ENCODE measurements at regions of chr9 and their contacts with region 1.

Region 1: DNA sequence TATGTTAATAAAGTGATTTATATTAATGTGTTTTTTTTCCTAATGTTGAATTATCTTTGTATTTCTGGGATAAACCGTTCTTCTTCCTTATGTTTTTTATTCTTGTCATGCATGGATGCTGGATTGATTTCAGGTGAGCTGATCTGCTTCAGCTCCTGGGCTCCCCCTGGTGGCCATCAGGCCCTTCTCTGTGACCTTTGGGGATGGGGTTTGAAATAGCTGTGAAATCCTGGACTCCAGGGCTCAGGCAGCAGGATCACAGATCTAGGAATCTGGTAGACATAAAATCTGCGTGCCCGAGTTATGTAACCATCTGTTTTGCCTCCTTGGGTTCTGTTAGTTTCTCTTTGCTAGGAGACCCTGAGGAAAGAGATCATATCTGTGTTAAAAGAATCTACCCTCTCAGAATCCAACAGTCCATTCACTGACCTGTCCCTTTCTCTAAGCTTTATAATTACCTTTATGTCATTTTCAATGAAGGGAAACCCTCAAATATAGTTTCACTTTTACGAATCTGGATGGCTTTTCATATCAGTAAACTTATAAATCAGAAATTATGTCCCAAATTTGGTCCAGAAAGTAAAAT is 12.2 kb upstream of the OR13J1 start:
- DNase-seq: peak; percentile 70 to 75 (median 71)
- H3K4me3 ChIP-seq: no peak overlapping the region
- H3K4me3 Mint-ChIP-seq: no peak overlapping the region
- H3K27ac ChIP-seq: no peak overlapping the region
- H3K27ac Mint-ChIP-seq: no peak overlapping the region
- H3K4me1 ChIP-seq: no peaks in the 10 kb centered on the region
- H3K4me1 Mint-ChIP-seq: no peaks in the 10 kb centered on the region
- H3K27me3 ChIP-seq: no peaks in the 10 kb centered on the region
- H3K27me3 Mint-ChIP-seq: peaks cover 2 to 8% of the 10 kb centered on the region in 2 donors

Region 2: GRCh38 chr9:35489313-35490154 is 392.8 kb before region 1 on chr9 and contains the start of gene RUSC2:
- CTCF ChIA-PET with region 1: no interaction called
- POLR2A ChIA-PET with region 1: no interaction called
- intact Hi-C with region 1: loop called (anchors 10 kb)
- DNase-seq: peak in 4 of 5 donors; percentile 16 to 30 (median 24)
- H3K4me3 ChIP-seq: peak within 1 kb of the TSS in 1 of 2 donors; percentile 45
- H3K4me3 Mint-ChIP-seq: peak within 1 kb of the TSS; percentile 55 to 85 (median 78)
- H3K27ac ChIP-seq: no peak within 1 kb of the TSS
- H3K27ac Mint-ChIP-seq: peak within 1 kb of the TSS in 3 of 7 donors; percentile 31 to 36 (median 35)
- H3K4me1 ChIP-seq: peaks cover 11% of the 10 kb centered on the region
- H3K4me1 Mint-ChIP-seq: peaks cover 7 to 20% (median 13%) of the 10 kb centered on the region in 4 donors
- H3K27me3 ChIP-seq: peaks cover 6% of the 10 kb centered on the region
- H3K27me3 Mint-ChIP-seq: peaks cover 16 to 23% of the 10 kb centered on the region in 2 donors
- total RNA-seq, gene RUSC2: 0.50 to 0.55 TPM

Region 3: DNA sequence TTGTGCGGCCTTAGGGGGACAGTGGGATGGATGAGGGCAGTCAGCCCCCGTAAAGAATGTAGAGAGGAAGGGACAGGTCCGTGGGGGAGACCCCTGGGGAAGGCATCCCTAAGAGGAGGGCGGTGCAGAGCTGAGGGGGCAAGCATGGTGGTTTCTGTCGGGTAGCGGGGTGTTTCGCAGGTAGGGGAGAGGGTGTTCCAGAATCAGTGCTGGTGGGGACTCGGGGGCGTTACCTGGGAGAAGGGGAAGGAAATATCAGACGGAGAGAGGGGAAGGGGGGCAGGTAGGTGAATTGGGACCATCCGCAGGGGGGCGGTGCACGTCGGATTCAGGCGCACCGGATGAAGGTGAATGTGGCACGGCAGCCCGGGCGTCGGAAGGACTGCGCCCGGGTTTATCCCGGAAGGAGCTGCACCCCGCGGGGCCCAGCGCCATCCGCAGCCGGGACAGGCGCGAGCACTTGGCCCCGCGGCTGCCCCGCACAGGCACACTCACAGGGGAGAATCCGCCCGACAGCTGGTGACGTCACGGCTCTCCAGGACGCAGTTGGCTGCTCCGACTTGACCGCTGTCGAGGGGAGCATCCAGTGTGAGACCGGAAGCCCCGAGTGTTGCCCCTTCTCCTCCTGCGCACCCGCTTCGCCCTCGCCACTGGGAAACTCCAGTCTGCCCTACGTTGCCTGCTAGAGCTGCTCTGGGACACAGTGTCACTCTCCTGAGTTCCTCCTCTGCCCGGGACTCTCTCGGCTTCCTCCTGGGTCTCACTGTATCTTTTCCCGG is 265.5 kb before region 1 on chr9:
- CTCF ChIA-PET with region 1: no interaction called
- POLR2A ChIA-PET with region 1: no interaction called
- intact Hi-C with region 1: loop called (anchors 5 kb)
- DNase-seq: peak; percentile 63 to 75 (median 64)
- H3K4me3 ChIP-seq: peak overlapping the region; percentile 63 to 64
- H3K4me3 Mint-ChIP-seq: peak overlapping the region; percentile 84 to 91 (median 88)
- H3K27ac ChIP-seq: peak overlapping the region; percentile 60
- H3K27ac Mint-ChIP-seq: peak overlapping the region; percentile 89 to 95 (median 93)
- H3K4me1 ChIP-seq: peaks cover 36% of the 10 kb centered on the region
- H3K4me1 Mint-ChIP-seq: peaks cover 26 to 58% (median 35%) of the 10 kb centered on the region in 4 donors
- H3K27me3 ChIP-seq: no peaks in the 10 kb centered on the region
- H3K27me3 Mint-ChIP-seq: no peaks in the 10 kb centered on the region

Region 4: GRCh38 chr9:35790385-35791296 is 91.7 kb before region 1 on chr9:
- CTCF ChIA-PET with region 1: interaction called, 108 read pairs
- POLR2A ChIA-PET with region 1: interaction called, 7 read pairs
- intact Hi-C with region 1: loop called (anchors 1 kb)
- DNase-seq: peak; percentile 58 to 69 (median 64)
- H3K4me3 ChIP-seq: no peak overlapping the region
- H3K4me3 Mint-ChIP-seq: no peak overlapping the region
- H3K27ac ChIP-seq: no peak overlapping the region
- H3K27ac Mint-ChIP-seq: peak overlapping the region in 2 of 7 donors; percentile 27 to 47
- H3K4me1 ChIP-seq: no peaks in the 10 kb centered on the region
- H3K4me1 Mint-ChIP-seq: peaks cover 7 to 12% (median 9%) of the 10 kb centered on the region in 4 donors
- H3K27me3 ChIP-seq: no peaks in the 10 kb centered on the region
- H3K27me3 Mint-ChIP-seq: no peaks in the 10 kb centered on the region

Region 5: GRCh38 chr9:35797311-35798109 is 84.8 kb before region 1 on chr9:
- CTCF ChIA-PET with region 1: interaction called, 11 read pairs
- POLR2A ChIA-PET with region 1: no interaction called
- intact Hi-C with region 1: no loop called
- DNase-seq: no peak
- H3K4me3 ChIP-seq: no peak overlapping the region
- H3K4me3 Mint-ChIP-seq: no peak overlapping the region
- H3K27ac ChIP-seq: no peak overlapping the region
- H3K27ac Mint-ChIP-seq: peak overlapping the region in 4 of 7 donors; percentile 15 to 58 (median 44)
- H3K4me1 ChIP-seq: no peaks in the 10 kb centered on the region
- H3K4me1 Mint-ChIP-seq: peaks cover 5 to 12% (median 5%) of the 10 kb centered on the region in 4 donors
- H3K27me3 ChIP-seq: no peaks in the 10 kb centered on the region
- H3K27me3 Mint-ChIP-seq: no peaks in the 10 kb centered on the region

Region 6: GRCh38 chr9:35829084-35829763 is 53.1 kb before region 1 on chr9 and contains the start of gene TMEM8B:
- CTCF ChIA-PET with region 1: interaction called, 12 read pairs
- POLR2A ChIA-PET with region 1: no interaction called
- intact Hi-C with region 1: loop called (anchors 1 kb)
- DNase-seq: peak; percentile 85 to 96 (median 88)
- H3K4me3 ChIP-seq: peak within 1 kb of the TSS; percentile 61 to 70
- H3K4me3 Mint-ChIP-seq: peak within 1 kb of the TSS; percentile 92 to 100 (median 96)
- H3K27ac ChIP-seq: peak within 1 kb of the TSS; percentile 66
- H3K27ac Mint-ChIP-seq: peak within 1 kb of the TSS; percentile 74 to 99 (median 98)
- H3K4me1 ChIP-seq: peaks cover 20% of the 10 kb centered on the region
- H3K4me1 Mint-ChIP-seq: peaks cover 23 to 39% (median 35%) of the 10 kb centered on the region in 4 donors
- H3K27me3 ChIP-seq: no peaks in the 10 kb centered on the region
- H3K27me3 Mint-ChIP-seq: no peaks in the 10 kb centered on the region
- total RNA-seq, gene TMEM8B: 7.4 to 10.5 TPM

Region 7: DNA sequence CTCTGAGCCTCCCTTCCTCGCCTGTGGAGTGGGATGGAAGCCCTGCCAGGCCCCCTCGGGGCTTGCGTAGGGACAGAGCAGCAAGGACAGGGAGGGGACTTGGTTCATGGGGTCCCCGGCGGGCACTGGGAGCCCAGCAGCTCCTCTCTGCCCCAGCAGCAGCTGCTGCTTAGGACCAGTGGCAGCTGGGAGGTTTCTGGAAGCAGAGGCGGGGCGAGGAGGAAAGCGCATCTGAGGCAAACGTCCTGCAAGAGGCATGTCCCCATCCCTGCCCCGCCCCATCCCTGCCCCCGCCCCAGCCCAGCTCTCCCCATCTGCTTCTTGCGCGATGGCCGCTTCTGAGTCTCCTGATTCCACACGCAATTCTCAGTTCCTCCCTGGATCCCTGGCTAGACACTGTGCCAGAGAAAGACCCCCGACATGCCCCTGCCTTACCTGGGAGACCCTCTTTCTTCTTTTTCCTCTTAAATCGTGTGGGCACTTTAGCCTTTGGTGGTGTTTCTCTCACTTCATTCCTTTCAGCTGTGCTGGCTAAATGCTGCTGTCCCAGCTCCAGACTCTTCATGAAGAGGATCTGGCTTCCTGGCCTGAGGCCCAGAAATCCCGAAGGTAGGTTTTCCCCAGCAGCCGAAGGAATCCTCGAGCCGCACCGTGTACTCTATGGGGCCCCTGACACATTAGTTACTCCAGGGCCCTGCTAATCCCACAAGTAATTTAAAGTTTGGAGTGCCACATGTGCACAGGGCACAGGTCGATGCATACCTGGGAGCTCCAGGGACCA is 80.0 kb after region 1 on chr9:
- CTCF ChIA-PET with region 1: no interaction called
- POLR2A ChIA-PET with region 1: no interaction called
- intact Hi-C with region 1: no loop called
- DNase-seq: no peak
- H3K4me3 ChIP-seq: no peak overlapping the region
- H3K4me3 Mint-ChIP-seq: no peak overlapping the region
- H3K27ac ChIP-seq: no peak overlapping the region
- H3K27ac Mint-ChIP-seq: no peak overlapping the region
- H3K4me1 ChIP-seq: no peaks in the 10 kb centered on the region
- H3K4me1 Mint-ChIP-seq: no peaks in the 10 kb centered on the region
- H3K27me3 ChIP-seq: peaks cover 3% of the 10 kb centered on the region
- H3K27me3 Mint-ChIP-seq: peaks cover 3 to 9% of the 10 kb centered on the region in 2 donors

Region 8: GRCh38 chr9:36461323-36461722 is 579.0 kb after region 1 on chr9:
- CTCF ChIA-PET with region 1: no interaction called
- POLR2A ChIA-PET with region 1: no interaction called
- intact Hi-C with region 1: no loop called
- DNase-seq: no peak
- H3K4me3 ChIP-seq: no peak overlapping the region
- H3K4me3 Mint-ChIP-seq: peak overlapping the region in 1 of 8 donors; percentile 28
- H3K27ac ChIP-seq: no peak overlapping the region
- H3K27ac Mint-ChIP-seq: peak overlapping the region; percentile 2 to 64 (median 43)
- H3K4me1 ChIP-seq: peaks cover 29% of the 10 kb centered on the region
- H3K4me1 Mint-ChIP-seq: peaks cover 43 to 68% (median 53%) of the 10 kb centered on the region in 4 donors
- H3K27me3 ChIP-seq: no peaks in the 10 kb centered on the region
- H3K27me3 Mint-ChIP-seq: no peaks in the 10 kb centered on the region